Activated CD8-positive, alpha-beta T cell treated with anti-CD3 and anti-CD28 coated beads for 36 hours (primary cell): ENCODE measurements at regions of chr5 and their contacts with region 1.

Region 1: GRCh38 chr5:10627160-10627701 is 63.4 kb downstream of the ANKRD33B start:
- DNase-seq: peak; percentile 40
- ATAC-seq: peak; percentile 25
- H3K4me3 Mint-ChIP-seq: peak overlapping the region; percentile 69
- H3K27ac Mint-ChIP-seq: peak overlapping the region; percentile 83
- H3K4me1 Mint-ChIP-seq: peaks cover 48% of the 10 kb centered on the region
- H3K27me3 Mint-ChIP-seq: peaks cover 6% of the 10 kb centered on the region
- CTCF ChIP-seq: no peak

Region 2: DNA sequence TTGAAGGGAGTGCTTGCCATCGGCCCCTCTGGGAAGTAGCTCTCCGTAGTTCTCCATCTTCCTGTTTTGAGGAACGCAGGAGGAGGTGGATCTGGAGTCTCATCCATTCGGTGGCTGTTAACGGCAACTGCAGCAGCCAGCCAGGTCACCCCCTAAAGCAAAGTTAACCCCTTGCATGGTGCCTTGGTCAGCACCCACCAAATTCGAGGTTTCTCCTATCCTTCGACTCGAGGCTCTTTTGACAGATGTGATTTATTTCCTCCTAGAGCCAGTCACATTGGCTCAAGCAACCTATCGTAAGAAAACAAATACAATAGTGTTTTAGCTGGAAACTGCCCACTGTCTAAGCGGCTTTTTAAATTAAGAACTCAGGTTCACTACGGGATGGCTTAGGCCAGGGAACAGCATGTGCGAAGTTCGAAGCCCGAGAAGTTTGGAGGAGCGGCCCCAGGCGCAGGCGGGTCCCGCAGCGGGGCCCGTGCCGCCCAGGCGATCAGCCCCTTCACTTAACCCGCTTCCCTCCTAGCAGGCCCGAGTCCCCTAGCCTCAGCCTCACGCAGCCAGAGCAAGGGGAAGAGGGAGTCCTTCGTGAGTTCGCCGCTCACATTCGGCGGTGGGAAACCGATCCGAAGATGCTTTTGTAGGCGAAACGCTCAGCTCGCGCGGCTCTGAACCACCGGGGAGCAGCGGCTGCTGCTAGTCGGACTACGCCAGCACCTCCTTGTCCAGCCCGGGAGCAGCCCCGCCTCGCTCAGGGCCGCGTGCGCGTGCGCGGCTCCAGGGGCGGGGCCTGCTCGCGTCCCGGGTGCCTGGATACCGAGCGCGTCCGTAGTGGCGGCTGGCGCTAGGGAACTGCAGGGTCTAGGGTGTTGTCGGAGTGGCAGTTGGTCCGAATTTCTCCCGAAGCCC is 185.9 kb before region 1 on chr5 and contains the start of gene ROPN1L:
- CTCF ChIA-PET with region 1: interaction called, 23 read pairs
- POLR2A ChIA-PET with region 1: no interaction called
- intact Hi-C with region 1: no loop called
- DNase-seq: peak; percentile 76
- ATAC-seq: peak; percentile 98
- H3K4me3 Mint-ChIP-seq: peak within 1 kb of the TSS; percentile 72
- H3K27ac Mint-ChIP-seq: no peak within 1 kb of the TSS
- H3K4me1 Mint-ChIP-seq: peaks cover 27% of the 10 kb centered on the region
- H3K27me3 Mint-ChIP-seq: peaks cover 8% of the 10 kb centered on the region
- CTCF ChIP-seq: no peak
- total RNA-seq, gene ROPN1L: not detected

Region 3: GRCh38 chr5:10489810-10490426 is 137.3 kb before region 1 on chr5:
- CTCF ChIA-PET with region 1: interaction called, 14 read pairs
- POLR2A ChIA-PET with region 1: no interaction called
- intact Hi-C with region 1: no loop called
- DNase-seq: peak; percentile 55
- ATAC-seq: peak; percentile 88
- H3K4me3 Mint-ChIP-seq: no peak overlapping the region
- H3K27ac Mint-ChIP-seq: no peak overlapping the region
- H3K4me1 Mint-ChIP-seq: peaks cover 17% of the 10 kb centered on the region
- H3K27me3 Mint-ChIP-seq: peaks cover 1% of the 10 kb centered on the region
- CTCF ChIP-seq: no peak

Region 4: DNA sequence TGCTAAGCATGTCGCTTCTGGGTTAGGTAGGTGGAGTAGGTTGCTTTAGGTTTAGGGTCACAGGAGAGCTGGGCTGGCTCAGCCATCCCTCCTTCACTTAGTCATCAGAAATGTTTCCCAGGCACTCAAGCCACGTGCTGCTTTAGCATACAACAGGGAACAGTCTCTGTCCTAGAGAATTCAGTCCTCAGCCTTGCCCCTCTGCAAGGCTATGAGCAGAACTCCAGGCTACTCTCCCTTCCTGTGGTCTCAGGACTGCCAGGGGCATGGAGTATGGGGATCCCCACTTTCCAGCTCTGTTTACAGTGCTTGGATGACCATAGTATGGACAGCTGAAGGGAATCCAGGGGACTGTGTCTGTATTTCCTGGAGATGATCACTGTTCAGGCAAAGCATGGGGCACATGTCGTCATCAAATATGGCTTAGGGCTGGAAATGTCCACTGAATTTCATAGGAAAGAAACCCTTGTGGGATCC is 70.9 kb before region 1 on chr5:
- CTCF ChIA-PET with region 1: interaction called, 22 read pairs
- POLR2A ChIA-PET with region 1: no interaction called
- intact Hi-C with region 1: no loop called
- DNase-seq: no peak
- ATAC-seq: no peak
- H3K4me3 Mint-ChIP-seq: no peak overlapping the region
- H3K27ac Mint-ChIP-seq: no peak overlapping the region
- H3K4me1 Mint-ChIP-seq: peaks cover 2% of the 10 kb centered on the region
- H3K27me3 Mint-ChIP-seq: peaks cover 13% of the 10 kb centered on the region
- CTCF ChIP-seq: no peak

Region 5: GRCh38 chr5:10607666-10608073 is 19.6 kb before region 1 on chr5:
- CTCF ChIA-PET with region 1: interaction called, 20 read pairs
- POLR2A ChIA-PET with region 1: no interaction called
- intact Hi-C with region 1: no loop called
- DNase-seq: peak; percentile 29
- ATAC-seq: peak; percentile 31
- H3K4me3 Mint-ChIP-seq: no peak overlapping the region
- H3K27ac Mint-ChIP-seq: no peak overlapping the region
- H3K4me1 Mint-ChIP-seq: peaks cover 18% of the 10 kb centered on the region
- H3K27me3 Mint-ChIP-seq: peaks cover 17% of the 10 kb centered on the region
- CTCF ChIP-seq: no peak

Region 6: DNA sequence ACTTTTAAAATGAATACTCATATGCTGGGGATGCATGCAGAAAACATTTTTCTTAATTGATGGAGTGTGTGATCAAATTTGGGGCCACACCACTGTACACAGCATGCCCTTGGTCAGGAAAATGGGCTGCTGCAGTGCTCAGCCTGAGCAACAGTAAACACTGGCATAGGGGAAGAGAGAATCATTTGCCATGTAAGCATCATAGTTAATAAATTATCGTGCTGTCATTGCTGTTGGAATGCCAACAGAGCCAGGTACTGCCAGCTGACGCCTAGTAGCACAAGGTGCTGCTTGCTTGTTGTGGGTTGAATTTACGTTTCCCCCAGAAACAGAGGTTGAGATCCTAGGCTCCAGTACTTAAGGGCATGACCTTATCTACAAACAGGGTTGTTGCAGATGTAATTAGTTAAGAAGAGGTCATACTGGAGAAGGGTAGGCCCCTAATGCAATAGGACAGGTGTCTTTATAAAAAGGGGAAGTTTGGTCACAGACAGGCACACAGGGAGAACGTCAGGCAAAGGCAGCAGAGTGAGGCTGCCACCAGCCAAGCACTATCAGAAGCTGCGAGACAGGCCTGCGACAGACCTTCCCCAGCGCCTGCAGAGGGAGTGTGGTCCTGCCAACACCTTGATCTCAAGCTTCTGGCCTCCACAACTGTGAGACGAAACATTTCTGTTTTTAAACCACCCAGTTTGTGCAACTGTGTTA is 108.5 kb after region 1 on chr5:
- CTCF ChIA-PET with region 1: no interaction called
- POLR2A ChIA-PET with region 1: no interaction called
- intact Hi-C with region 1: no loop called
- DNase-seq: no peak
- ATAC-seq: no peak
- H3K4me3 Mint-ChIP-seq: no peak overlapping the region
- H3K27ac Mint-ChIP-seq: no peak overlapping the region
- H3K4me1 Mint-ChIP-seq: peaks cover 6% of the 10 kb centered on the region
- H3K27me3 Mint-ChIP-seq: no peaks in the 10 kb centered on the region
- CTCF ChIP-seq: no peak